AG04449 (cell line): ENCODE measurements at regions of chr5 and their contacts with region 1.

Region 1: GRCh38 chr5:66864331-66864840 is 268.2 kb downstream of the MAST4 start:
- DNase-seq: no peak
- H3K4me3 ChIP-seq: no peak overlapping the region
- CTCF ChIP-seq: peak; percentile 60

Region 2: DNA sequence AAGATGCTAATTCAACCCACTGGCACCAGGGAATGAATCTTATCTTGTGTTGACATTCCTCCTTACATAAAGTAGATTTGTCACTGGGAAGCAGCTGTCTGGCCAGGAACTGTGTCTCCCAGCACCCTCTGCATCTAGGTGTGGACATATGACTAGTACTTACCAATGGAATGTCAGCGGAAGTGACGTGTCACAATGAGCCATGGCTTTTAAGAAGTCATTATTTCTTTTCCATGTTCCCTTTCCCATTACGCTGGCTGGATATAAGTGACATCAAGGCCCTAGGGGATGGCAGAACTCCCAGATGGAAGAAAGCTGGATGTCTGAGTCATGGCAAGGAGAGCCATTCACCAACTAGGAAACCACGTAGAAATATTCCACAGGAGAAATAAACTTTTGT is 352.9 kb before region 1 on chr5:
- CTCF ChIA-PET with region 1: no interaction called
- POLR2A ChIA-PET with region 1: no interaction called
- DNase-seq: no peak
- H3K4me3 ChIP-seq: no peak overlapping the region
- CTCF ChIP-seq: no peak

Region 3: GRCh38 chr5:66851306-66851705 is 13.1 kb before region 1 on chr5:
- CTCF ChIA-PET with region 1: interaction called, 20 read pairs
- POLR2A ChIA-PET with region 1: no interaction called
- DNase-seq: no peak
- H3K4me3 ChIP-seq: no peak overlapping the region
- CTCF ChIP-seq: no peak

Region 4: DNA sequence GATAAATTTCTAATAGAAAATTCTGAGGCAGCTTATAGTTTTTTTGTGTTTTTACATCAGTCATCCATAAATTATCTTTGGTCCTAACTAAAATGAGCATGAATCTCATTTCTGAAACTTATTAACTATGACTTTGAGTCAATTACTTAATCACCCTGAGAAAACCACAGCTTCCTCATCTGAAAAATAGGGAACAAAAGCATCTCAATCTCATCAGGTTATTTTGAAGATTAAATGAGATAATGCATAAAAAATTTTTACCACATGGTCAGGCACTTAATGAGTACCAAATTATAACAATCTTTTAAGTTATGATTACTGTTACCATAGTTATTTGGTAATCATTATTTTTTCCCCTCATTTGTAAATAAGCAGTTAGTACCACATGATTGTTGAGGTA is 10.9 kb after region 1 on chr5:
- CTCF ChIA-PET with region 1: interaction called, 24 read pairs
- POLR2A ChIA-PET with region 1: no interaction called
- DNase-seq: no peak
- H3K4me3 ChIP-seq: no peak overlapping the region
- CTCF ChIP-seq: no peak